Ascending aorta (tissue), 2 donors: ENCODE measurements at regions of chr1 and their contacts with region 1.

Region 1: DNA sequence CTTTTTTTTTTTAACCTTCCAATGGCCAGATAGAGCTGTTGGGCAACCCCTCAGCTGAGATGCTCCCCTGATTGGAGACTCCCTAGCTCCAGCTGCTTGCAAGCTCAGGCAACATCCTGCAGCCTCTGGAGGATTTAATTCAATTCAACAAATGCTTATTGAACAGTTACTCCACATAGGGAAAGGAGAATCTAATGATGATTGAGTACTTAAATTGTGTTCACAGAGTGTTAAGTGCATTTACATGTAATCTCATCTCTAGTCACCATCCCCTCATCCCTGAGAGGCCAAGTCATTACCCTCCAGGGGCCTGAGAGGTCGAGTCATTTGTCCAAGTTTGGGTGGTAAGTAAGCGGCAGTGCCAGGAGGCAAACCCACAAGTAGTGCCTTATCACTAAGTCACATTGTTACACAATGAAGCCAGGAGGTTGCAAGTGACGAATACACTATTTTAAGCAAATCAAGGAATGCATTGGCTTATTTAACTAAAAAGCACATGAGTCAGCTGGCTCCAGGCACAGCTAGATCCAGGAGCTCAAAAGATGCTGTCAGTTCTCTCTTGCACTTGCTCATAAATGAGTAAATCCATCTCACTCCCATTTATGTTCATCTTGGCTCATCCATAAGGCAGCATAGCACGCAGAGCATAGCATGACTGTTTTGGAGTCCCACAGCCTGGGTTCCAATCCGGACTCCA is 64.3 kb downstream of the OPTC start:
- DNase-seq: peak; percentile 63 to 96
- H3K4me3 ChIP-seq: no peak overlapping the region
- H3K27ac ChIP-seq: peak overlapping the region; percentile 95 to 99
- H3K4me1 ChIP-seq: peaks cover 29 to 49% of the 10 kb centered on the region in 2 donors
- H3K27me3 ChIP-seq: no peaks in the 10 kb centered on the region
- CTCF ChIP-seq: no peak

Region 2: GRCh38 chr1:203504397-203505250 is 53.6 kb before region 1 on chr1:
- intact Hi-C with region 1: loop called (anchors 2 kb)
- DNase-seq: peak in 1 of 2 donors; percentile 92
- H3K4me3 ChIP-seq: no peak overlapping the region
- H3K27ac ChIP-seq: no peak overlapping the region
- H3K4me1 ChIP-seq: peaks cover 0 to 13% of the 10 kb centered on the region in 2 donors
- H3K27me3 ChIP-seq: no peaks in the 10 kb centered on the region
- CTCF ChIP-seq: peak; percentile 75 to 87 (median 84)

Region 3: DNA sequence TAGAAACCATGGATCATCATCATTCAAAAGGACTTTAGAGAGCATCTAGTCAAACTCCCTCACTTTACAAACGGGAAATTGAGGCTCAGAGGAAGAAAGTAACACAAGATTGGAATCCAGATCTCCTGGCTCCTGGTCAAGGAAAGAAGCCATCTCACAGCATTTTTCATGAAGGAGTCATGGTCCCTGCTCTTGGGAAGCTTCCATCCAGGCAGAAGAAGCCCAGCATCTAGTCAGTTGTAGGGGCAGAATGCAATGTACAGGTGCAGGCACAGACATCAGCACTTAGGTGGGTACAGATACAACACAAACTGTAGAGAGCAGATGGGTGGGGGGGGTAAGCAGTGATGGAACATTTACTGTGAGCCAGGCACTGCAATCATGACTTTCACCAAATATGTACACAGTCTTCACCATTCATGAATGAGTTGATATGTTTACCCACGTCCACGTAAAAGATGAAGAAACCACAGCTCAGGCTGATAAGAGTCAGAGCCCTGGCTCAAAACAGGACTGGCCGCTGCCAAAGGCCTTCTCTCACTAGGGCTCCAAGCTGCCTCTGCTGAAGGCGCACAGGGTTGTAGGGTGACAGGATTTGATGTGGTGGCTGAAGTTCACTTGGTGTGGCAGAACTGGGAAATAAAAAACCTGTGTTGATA is 20.3 kb before region 1 on chr1:
- intact Hi-C with region 1: loop called (anchors 1 kb)
- DNase-seq: peak in 1 of 2 donors; percentile 80
- H3K4me3 ChIP-seq: no peak overlapping the region
- H3K27ac ChIP-seq: peak overlapping the region; percentile 76 to 79
- H3K4me1 ChIP-seq: peaks cover 4 to 23% of the 10 kb centered on the region in 2 donors
- H3K27me3 ChIP-seq: no peaks in the 10 kb centered on the region
- CTCF ChIP-seq: no peak

Region 4: GRCh38 chr1:203673550-203674427 is 115.6 kb after region 1 on chr1:
- intact Hi-C with region 1: loop called (anchors 1 kb)
- DNase-seq: peak; percentile 49 to 89
- H3K4me3 ChIP-seq: no peak overlapping the region
- H3K27ac ChIP-seq: peak overlapping the region; percentile 82 to 93
- H3K4me1 ChIP-seq: peaks cover 15 to 56% of the 10 kb centered on the region in 2 donors
- H3K27me3 ChIP-seq: no peaks in the 10 kb centered on the region
- CTCF ChIP-seq: peak in 1 of 3 experiments; percentile 7

Region 5: GRCh38 chr1:203795441-203796235 is 237.4 kb after region 1 on chr1 and contains the starts of genes ZBED6 and ZC3H11A:
- intact Hi-C with region 1: loop called (anchors 5 kb)
- DNase-seq: peak; percentile 97 to 100
- H3K4me3 ChIP-seq: peak within 1 kb of the TSS; percentile 82 to 92
- H3K27ac ChIP-seq: peak within 1 kb of the TSS; percentile 96 to 98
- H3K4me1 ChIP-seq: peaks cover 9 to 38% of the 10 kb centered on the region in 2 donors
- H3K27me3 ChIP-seq: no peaks in the 10 kb centered on the region
- CTCF ChIP-seq: no peak
- total RNA-seq, gene ZBED6: 1.5 TPM
- total RNA-seq, gene ZC3H11A: 44.4 TPM